PC-9 (cell line): ENCODE measurements at regions of chr9 and their contacts with region 1.

Region 1: DNA sequence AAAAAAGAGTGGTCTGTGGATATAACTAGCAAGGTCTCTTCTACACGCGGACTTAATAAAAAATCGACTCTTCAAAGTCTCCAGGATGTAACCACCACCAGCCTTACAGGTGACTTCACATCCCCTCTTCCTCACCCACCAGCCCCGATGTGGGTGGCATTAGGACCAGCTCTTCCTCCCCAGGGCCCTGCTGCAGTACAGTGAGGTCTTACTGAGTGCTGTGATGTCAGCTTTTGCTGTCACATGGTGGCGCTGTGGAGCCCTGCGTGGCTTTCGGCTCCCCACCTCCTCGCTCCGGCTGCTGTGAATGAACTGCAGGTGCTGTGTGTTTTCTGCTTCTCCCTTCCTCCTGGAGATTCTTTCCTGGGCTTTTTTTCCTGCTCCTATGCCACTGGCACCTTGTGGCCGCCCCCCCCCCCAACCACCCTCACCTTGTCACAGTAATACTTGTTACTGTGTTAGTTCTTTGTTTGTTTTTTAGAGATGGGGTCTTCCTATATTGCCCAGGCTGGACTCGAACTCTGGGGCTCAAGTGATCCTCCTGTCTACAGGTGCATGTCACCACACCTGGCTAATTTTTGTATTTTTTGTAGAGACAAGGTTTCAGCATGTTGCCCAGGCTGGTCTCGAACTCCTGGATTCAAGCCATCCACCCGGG is 15.8 kb upstream of the RAPGEF1 start:
- DNase-seq: peak; percentile 60 to 84
- H3K4me3 ChIP-seq: no peak overlapping the region
- H3K27ac ChIP-seq: no peak overlapping the region
- H3K4me1 ChIP-seq: 0 out of 2 replicates have a peak, but pooled peaks cover 5% of the 10 kb centered on the region
- H3K27me3 ChIP-seq: no peaks in the 10 kb centered on the region
- CTCF ChIP-seq: peak; percentile 73

Region 2: GRCh38 chr9:131500939-131501541 is 254.6 kb before region 1 on chr9:
- CTCF ChIA-PET with region 1: no interaction called
- POLR2A ChIA-PET with region 1: no interaction called
- intact Hi-C with region 1: no loop called
- DNase-seq: peak; percentile 45 to 74
- H3K4me3 ChIP-seq: no peak overlapping the region
- H3K27ac ChIP-seq: no peak overlapping the region
- H3K4me1 ChIP-seq: no peaks in the 10 kb centered on the region
- H3K27me3 ChIP-seq: no peaks in the 10 kb centered on the region
- CTCF ChIP-seq: no peak

Region 3: GRCh38 chr9:131608493-131609037 is 147.1 kb before region 1 on chr9:
- CTCF ChIA-PET with region 1: no interaction called
- POLR2A ChIA-PET with region 1: no interaction called
- intact Hi-C with region 1: no loop called
- DNase-seq: peak; percentile 78 to 85
- H3K4me3 ChIP-seq: peak overlapping the region; percentile 34; the same call in 1 of the 2 replicates
- H3K27ac ChIP-seq: peak overlapping the region; percentile 44; the same call in 1 of the 2 replicates
- H3K4me1 ChIP-seq: peaks cover 20% of the 10 kb centered on the region
- H3K27me3 ChIP-seq: no peaks in the 10 kb centered on the region
- CTCF ChIP-seq: no peak

Region 4: GRCh38 chr9:131807144-131807983 is 51.7 kb after region 1 on chr9:
- CTCF ChIA-PET with region 1: interaction called, 10 read pairs
- POLR2A ChIA-PET with region 1: no interaction called
- intact Hi-C with region 1: no loop called
- DNase-seq: no peak
- H3K4me3 ChIP-seq: no peak overlapping the region
- H3K27ac ChIP-seq: no peak overlapping the region
- H3K4me1 ChIP-seq: no peaks in the 10 kb centered on the region
- H3K27me3 ChIP-seq: peaks cover 79% of the 10 kb centered on the region
- CTCF ChIP-seq: no peak

Region 5: DNA sequence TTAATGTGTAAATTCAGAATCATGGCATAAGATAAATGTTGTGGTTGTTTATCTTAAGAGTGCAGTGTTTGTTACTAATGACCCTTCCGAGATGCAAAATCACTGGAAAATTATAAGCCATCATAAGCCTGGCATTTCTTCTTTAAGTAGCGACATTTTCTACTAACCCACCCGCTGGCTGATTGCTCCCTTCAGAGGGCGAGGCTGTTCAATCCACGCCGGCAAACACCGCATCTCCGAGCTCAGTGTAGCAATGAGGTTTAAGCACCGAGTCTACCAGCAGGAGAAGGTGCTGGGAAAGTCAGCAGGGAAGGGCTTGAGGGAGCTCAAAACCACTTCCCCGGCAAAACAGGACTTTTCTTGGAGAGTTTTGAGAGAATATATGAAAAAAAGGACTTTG is 1069.8 kb after region 1 on chr9:
- CTCF ChIA-PET with region 1: no interaction called
- POLR2A ChIA-PET with region 1: interaction called, 21 read pairs
- intact Hi-C with region 1: no loop called
- DNase-seq: no peak
- H3K4me3 ChIP-seq: no peak overlapping the region
- H3K27ac ChIP-seq: no peak overlapping the region
- H3K4me1 ChIP-seq: no peaks in the 10 kb centered on the region
- H3K27me3 ChIP-seq: no peaks in the 10 kb centered on the region
- CTCF ChIP-seq: no peak